Vagina (tissue), 2 donors: ENCODE measurements at regions of chr17 and their contacts with region 1.

Region 1: GRCh38 chr17:65556014-65556909 is 5.2 kb downstream of the AXIN2 start:
- DNase-seq: no peak
- H3K4me3 ChIP-seq: peak overlapping the region in 1 of 2 donors; percentile 96
- H3K27ac ChIP-seq: no peak overlapping the region
- H3K4me1 ChIP-seq: peaks cover 43% of the 10 kb centered on the region
- H3K27me3 ChIP-seq: no peaks in the 10 kb centered on the region
- CTCF ChIP-seq: peak; percentile 6 to 75 (median 68)
- POLR2A ChIP-seq: no peak

Region 2: GRCh38 chr17:65463242-65463641 is 93.0 kb before region 1 on chr17:
- intact Hi-C with region 1: loop called (anchors 5 kb)
- DNase-seq: peak in 1 of 2 donors; percentile 96
- H3K4me3 ChIP-seq: no peak overlapping the region
- H3K27ac ChIP-seq: no peak overlapping the region
- H3K4me1 ChIP-seq: peaks cover 8% of the 10 kb centered on the region
- H3K27me3 ChIP-seq: no peaks in the 10 kb centered on the region
- CTCF ChIP-seq: no peak
- POLR2A ChIP-seq: no peak

Region 3: DNA sequence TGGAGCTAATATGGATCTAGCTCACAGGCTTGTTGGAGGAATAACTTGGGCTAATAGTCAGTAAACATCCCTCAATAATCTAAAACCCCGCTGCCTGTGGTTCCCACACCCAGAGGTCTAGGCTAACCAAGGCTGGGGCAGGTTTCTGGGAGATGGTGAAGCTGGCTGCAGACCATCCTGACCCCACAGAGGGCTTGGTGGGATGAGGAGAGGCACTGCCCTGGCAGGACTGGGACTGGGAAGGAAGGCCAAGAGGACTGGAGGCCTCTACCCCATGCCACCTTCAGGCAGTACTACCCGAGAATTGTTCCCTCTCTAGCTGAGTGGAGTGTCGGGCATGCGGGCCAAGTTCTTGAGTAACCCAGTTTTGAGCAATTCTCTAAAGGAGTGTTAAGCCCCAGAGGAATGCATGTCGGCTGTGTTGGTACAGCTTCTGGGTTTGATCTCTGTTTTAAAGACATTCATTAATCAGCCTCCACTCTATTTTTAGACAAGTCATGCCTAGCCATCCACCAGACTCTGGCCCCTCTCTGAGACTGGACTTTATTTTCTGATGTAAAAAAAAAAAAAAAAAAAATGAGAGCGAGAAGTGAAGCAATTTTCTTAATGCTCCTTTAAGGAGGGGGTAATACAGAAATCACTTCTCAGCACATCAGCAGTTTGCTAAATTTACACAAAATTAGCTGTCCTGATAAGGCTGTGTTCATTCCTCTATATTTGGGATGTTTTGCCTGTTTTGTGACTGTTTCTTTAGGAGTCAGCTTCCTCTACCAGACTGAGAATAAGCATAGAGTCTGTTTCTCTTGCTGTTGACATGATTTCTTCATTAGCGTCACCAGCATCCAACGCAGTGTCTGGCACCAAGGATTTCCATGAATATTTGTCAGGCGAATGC is 83.6 kb before region 1 on chr17:
- intact Hi-C with region 1: loop called (anchors 1 kb)
- DNase-seq: no peak
- H3K4me3 ChIP-seq: no peak overlapping the region
- H3K27ac ChIP-seq: peak overlapping the region; percentile 56
- H3K4me1 ChIP-seq: no peaks in the 10 kb centered on the region
- H3K27me3 ChIP-seq: no peaks in the 10 kb centered on the region
- CTCF ChIP-seq: no peak
- POLR2A ChIP-seq: no peak

Region 4: DNA sequence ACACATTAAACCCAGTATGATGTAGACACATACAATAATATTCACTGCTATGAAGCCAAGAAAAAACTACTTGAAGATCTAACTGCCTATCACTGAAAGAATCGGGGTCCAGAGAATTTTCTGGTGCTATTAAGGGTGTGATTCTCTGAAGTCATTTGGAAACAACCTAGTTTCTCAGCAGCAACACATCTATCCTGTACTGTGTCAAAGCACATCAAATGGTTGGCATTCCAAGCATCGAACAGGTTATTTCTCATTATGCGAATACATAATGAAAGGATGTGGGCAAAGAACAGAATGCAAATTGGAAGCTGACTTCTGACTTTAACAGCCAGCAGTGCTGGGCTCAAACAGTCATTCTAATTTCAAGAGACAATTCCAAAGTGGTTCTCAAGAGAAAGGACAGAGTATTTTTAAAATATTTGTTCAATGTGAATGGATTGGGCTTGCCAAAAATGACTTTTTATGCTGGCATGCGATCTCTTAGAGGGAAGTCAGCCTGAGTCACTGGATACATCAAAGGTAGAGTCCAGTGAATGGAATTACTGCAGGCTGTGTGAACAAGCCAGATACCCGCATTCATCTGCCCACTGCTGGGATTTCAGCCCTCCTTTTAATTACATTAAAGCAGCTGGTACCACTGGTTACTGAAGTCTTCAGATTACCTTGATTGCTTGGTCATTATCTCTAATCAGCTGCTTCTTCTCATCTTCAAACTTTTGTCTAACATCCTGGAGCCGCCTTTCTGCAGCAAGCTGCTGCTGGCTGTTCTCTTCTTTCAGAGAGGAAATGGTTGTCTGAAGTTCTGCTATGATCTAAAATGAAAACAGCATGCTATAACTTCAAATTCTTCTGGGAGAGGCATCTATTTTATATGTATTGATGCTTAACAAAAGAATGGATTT is 186.4 kb after region 1 on chr17:
- intact Hi-C with region 1: loop called (anchors 5 kb)
- DNase-seq: no peak
- H3K4me3 ChIP-seq: no peak overlapping the region
- H3K27ac ChIP-seq: no peak overlapping the region
- H3K4me1 ChIP-seq: peaks cover 11% of the 10 kb centered on the region
- H3K27me3 ChIP-seq: no peaks in the 10 kb centered on the region
- CTCF ChIP-seq: no peak
- POLR2A ChIP-seq: no peak

Region 5: DNA sequence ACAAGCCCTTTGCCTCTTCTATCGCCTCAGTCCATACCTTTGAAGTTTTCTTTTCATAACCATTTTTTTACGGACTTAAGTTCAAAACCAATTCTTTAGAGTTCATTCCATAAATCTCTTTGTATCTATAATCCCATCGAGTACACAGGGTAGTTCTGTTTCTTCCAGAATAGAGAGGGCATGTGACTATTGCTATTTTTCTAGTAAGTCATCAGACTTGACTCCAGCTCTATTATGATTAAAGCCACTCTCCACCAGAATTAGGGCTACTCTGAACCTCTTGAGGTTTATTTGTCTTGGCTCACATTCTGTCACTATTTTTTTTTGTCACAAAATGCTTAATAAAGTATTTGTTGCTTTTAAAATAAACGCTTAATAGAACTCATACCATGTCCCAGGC is 197.1 kb after region 1 on chr17:
- intact Hi-C with region 1: no loop called
- DNase-seq: no peak
- H3K4me3 ChIP-seq: no peak overlapping the region
- H3K27ac ChIP-seq: no peak overlapping the region
- H3K4me1 ChIP-seq: peaks cover 17% of the 10 kb centered on the region
- H3K27me3 ChIP-seq: no peaks in the 10 kb centered on the region
- CTCF ChIP-seq: no peak
- POLR2A ChIP-seq: no peak